T-cell (primary cell): ENCODE measurements at regions of chr17 and their contacts with region 1.

Region 1: DNA sequence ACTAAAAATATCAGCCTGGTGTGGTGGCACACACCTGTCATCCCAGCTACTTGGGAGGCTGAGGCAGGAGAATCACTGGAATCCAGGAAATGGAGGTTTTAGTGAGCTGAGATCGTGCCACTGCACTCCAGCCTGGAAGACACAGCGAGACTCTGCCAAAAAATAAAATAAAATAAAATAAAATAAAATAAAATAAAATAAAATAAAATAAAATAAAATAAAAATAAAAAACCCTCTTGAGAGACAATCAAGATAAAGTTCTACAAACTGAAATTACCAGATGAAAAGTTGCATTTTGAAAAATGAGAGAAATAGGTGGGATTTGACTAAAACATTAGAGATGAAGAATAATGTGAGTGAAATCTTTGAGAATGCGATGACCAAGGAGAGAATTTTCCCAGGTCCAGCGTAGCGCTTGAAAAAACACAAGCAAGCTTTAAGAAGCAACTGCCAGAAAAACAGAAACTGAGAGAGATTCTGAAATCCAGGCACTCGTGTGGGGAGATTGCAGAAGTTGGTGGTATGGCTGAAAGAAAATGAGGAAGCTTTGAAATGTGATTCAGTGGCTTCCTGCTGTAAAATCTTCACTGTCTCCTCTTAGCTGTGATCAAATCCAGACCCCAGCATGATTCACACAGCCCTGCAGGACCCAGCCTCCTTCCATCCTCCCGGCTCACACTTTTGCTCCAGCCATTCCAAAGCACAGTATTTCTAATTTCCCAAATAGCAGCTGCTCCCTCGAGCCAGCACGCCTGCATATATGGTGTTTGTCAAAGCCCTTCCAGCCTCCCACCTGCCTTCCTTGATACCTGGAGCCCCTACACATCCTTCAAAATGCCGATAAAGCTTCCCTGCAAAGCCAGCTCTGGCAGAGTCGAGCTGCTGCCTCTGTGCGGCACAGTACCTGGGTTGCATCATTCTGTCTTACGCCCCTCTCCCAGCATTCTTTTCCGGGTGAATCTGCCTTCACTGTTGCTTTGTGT is 8.2 kb upstream of the CD300E start:
- DNase-seq: no peak
- ATAC-seq: no peak
- H3K4me3 ChIP-seq: no peak overlapping the region
- H3K4me3 Mint-ChIP-seq: no peak overlapping the region
- H3K27ac ChIP-seq: no peak overlapping the region
- H3K27ac Mint-ChIP-seq: no peak overlapping the region
- H3K4me1 ChIP-seq: no peaks in the 10 kb centered on the region
- H3K4me1 Mint-ChIP-seq: peaks cover 3 to 10% (median 4%) of the 10 kb centered on the region in 3 donors
- H3K27me3 ChIP-seq: peaks cover 0 to 56% of the 10 kb centered on the region in 2 experiments
- H3K27me3 Mint-ChIP-seq: peaks cover 10 to 49% of the 10 kb centered on the region in 2 donors

Region 2: DNA sequence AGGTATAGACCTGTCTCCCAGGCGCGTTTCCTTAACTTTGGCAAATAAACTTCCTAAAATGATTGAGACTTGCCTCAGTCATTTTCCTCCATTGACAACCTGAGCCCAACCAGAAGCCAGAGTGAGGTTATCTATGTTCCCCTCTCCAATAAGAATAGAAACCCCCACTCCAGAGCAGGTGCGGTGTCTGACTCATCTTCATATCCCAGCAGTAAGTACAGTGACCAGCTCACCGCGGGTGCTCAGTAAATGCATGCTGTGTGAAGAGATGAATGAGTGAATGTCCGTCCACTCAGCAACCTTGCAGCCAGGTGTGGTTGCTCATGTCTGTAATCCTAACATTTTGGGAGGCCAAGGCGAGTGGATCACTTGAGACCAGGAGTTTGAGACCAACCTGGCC is 11.2 kb after region 1 on chr17:
- CTCF ChIA-PET with region 1: interaction called in 1 of 2 experiments, 10 read pairs
- POLR2A ChIA-PET with region 1: no interaction called
- DNase-seq: no peak
- ATAC-seq: no peak
- H3K4me3 ChIP-seq: no peak overlapping the region
- H3K4me3 Mint-ChIP-seq: no peak overlapping the region
- H3K27ac ChIP-seq: no peak overlapping the region
- H3K27ac Mint-ChIP-seq: no peak overlapping the region
- H3K4me1 ChIP-seq: peaks cover 0 to 12% of the 10 kb centered on the region in 2 experiments
- H3K4me1 Mint-ChIP-seq: peaks cover 9 to 25% (median 11%) of the 10 kb centered on the region in 3 donors
- H3K27me3 ChIP-seq: peaks cover 0 to 40% of the 10 kb centered on the region in 2 experiments
- H3K27me3 Mint-ChIP-seq: peaks cover 17 to 38% of the 10 kb centered on the region in 2 donors